Colonic mucosa (tissue), 4 donors: ENCODE measurements at regions of chr16 and their contacts with region 1.

Region 1: DNA sequence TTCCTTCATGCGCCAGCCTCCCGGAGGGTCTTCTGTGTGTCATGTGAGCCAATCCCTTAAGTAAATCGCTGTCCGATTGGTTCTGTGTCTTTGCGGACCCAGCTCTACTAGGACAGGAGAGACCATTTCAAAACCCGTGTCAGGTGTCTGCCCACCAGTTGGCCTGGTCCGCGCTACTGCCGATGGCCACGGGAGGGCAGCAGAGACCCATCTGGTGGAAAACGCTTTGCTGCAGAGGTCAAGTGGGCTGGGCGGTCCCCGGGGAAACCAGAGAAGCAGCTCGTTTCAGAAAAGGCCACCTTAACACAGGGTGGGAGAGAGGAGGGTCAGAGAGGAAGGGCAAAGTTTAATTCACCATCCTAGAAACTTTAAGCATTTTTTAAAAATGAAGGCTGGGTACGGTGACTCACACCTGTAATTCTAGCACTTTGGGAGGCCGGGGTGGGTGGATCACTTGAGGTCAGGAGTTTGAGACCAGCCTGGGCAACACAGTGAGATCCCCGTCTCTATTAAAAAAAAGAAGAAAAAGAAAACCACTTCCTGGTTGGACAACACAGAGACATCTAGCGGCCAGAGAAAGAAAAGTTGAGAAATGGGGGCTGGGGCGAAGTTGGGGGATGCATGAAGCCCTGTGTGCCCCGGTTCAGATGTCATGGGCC is 2.8 kb upstream of the CIBAR2 start:
- DNase-seq: peak; percentile 95
- H3K4me3 ChIP-seq: no peak overlapping the region
- H3K27ac ChIP-seq: peak overlapping the region; percentile 44
- H3K4me1 ChIP-seq: no peaks in the 10 kb centered on the region
- H3K27me3 ChIP-seq: no peaks in the 10 kb centered on the region
- CTCF ChIP-seq: peak; percentile 93

Region 2: DNA sequence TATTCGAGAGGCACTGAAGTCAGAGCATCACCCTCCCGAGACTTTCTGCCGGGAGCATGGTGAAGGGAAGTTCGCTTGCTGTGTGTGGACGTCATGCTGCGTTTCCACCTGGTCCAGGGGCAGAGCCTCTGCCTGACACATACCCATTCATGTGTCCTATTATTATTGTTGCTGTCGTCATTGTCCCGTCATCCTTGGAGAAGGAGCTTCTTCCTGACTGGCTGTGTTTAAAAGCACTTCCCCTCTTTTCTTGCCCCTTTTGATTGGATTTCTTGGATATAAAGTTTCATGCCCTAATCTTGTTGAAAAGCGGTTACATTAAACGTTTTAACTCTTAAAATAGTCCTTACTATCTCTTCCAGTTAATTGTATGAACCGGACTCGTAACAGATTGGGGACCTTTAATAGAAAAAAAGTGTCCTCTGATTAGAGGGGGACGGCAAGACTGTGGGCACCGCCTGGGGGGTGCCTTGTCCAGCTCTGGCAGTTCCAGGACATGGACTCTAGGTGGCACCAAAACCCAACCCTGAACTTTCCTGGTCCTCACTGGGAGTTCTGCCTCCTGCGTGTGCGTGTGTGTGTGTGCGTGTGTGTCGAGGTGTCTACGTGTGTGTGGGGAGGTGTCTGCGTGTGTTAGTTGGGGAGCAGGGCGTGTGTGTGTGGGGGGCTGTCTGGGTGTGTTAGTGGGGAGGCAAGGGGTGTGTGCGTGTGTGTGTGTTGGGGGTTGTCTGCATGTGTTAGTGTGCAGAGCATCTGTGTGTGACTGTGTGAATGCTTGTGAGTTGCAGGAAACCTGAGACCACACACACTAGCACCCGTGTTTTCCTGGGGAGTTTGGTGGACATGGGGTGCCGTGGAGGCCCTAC is 130.5 kb after region 1 on chr16:
- intact Hi-C with region 1: loop called (anchors 5 kb)
- DNase-seq: peak; percentile 55
- H3K4me3 ChIP-seq: no peak overlapping the region
- H3K27ac ChIP-seq: no peak overlapping the region
- H3K4me1 ChIP-seq: no peaks in the 10 kb centered on the region
- H3K27me3 ChIP-seq: no peaks in the 10 kb centered on the region
- CTCF ChIP-seq: peak; percentile 70